Caco-2 (cell line): ENCODE measurements at regions of chr20 and their contacts with region 1.

Region 1: GRCh38 chr20:23659989-23660837 is 22.5 kb upstream of the CST3 start:
- DNase-seq: no peak
- H3K4me3 ChIP-seq: no peak overlapping the region
- H3K4me3 Mint-ChIP-seq: peak overlapping the region; percentile 48
- H3K27ac Mint-ChIP-seq: peak overlapping the region; percentile 80
- H3K4me1 ChIP-seq: peaks cover 79% of the 10 kb centered on the region
- H3K4me1 Mint-ChIP-seq: peaks cover 68% of the 10 kb centered on the region
- H3K27me3 ChIP-seq: no peaks in the 10 kb centered on the region
- H3K27me3 Mint-ChIP-seq: no peaks in the 10 kb centered on the region
- CTCF ChIP-seq: no peak

Region 2: GRCh38 chr20:23637282-23638221 is 22.7 kb before region 1 on chr20 and contains the start of gene CST3:
- CTCF ChIA-PET with region 1: no interaction called
- POLR2A ChIA-PET with region 1: interaction called, 3 read pairs
- intact Hi-C with region 1: loop called (anchors 2 kb)
- DNase-seq: peak; percentile 89 to 95
- H3K4me3 ChIP-seq: peak within 1 kb of the TSS; percentile 75
- H3K4me3 Mint-ChIP-seq: peak within 1 kb of the TSS; percentile 94
- H3K27ac Mint-ChIP-seq: peak within 1 kb of the TSS; percentile 91
- H3K4me1 ChIP-seq: peaks cover 34% of the 10 kb centered on the region
- H3K4me1 Mint-ChIP-seq: peaks cover 7% of the 10 kb centered on the region
- H3K27me3 ChIP-seq: no peaks in the 10 kb centered on the region
- H3K27me3 Mint-ChIP-seq: no peaks in the 10 kb centered on the region
- CTCF ChIP-seq: no peak
- total RNA-seq, gene CST3: 704 and 777 TPM in 2 replicates

Region 3: GRCh38 chr20:23691655-23692054 is 31.4 kb after region 1 on chr20:
- CTCF ChIA-PET with region 1: no interaction called
- POLR2A ChIA-PET with region 1: no interaction called
- intact Hi-C with region 1: loop called (anchors 2 kb)
- DNase-seq: no peak
- H3K4me3 ChIP-seq: no peak overlapping the region
- H3K4me3 Mint-ChIP-seq: no peak overlapping the region
- H3K27ac Mint-ChIP-seq: peak overlapping the region; percentile 17
- H3K4me1 ChIP-seq: peaks cover 41% of the 10 kb centered on the region
- H3K4me1 Mint-ChIP-seq: peaks cover 41% of the 10 kb centered on the region
- H3K27me3 ChIP-seq: no peaks in the 10 kb centered on the region
- H3K27me3 Mint-ChIP-seq: no peaks in the 10 kb centered on the region
- CTCF ChIP-seq: no peak